ENCODE measurements at regions of chr15 and their contacts with region 1.

Region 1: GRCh38 chr15:31799715-31800321 is 230.5 kb upstream of the CHRNA7 start:
- DNase-seq: peak; percentile 87
- H3K4me3 Mint-ChIP-seq: peak overlapping the region; percentile 39
- H3K27ac Mint-ChIP-seq: peak overlapping the region; percentile 94
- H3K4me1 Mint-ChIP-seq: peaks cover 44% of the 10 kb centered on the region
- H3K27me3 Mint-ChIP-seq: no peaks in the 10 kb centered on the region
- CTCF ChIP-seq: no peak

Region 2: DNA sequence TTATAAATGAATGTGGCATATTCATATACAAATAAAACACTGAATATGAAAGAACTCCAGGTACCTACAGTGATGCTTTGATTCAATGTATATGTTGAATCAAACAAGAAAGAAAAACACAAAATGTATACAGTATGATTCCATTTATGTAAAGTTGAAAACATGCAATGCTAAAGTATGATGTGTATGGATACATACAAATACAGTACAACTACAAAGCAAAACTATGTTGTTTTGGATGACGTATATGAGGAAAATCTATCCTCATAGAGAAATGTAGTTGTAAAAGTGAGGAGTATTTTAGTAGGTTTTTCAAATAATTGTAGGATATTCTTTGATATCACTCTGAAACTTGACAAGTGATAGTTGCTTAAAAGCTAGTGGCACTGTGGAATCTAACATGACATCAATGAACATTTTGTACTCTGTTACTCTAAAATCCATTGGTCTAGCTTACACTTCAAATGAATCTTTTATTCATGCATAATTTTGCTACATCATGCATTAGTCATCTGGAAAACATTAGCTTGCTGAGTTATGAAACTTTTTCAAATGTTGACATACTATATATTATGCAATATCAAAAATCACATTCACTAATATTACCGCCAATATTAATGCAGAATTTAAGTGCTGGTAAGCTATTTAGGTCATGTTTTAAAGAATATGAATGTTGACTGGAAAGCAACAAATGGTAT is 47.6 kb before region 1 on chr15:
- CTCF ChIA-PET with region 1: no interaction called
- POLR2A ChIA-PET with region 1: interaction called, 4 read pairs
- intact Hi-C with region 1: loop called (anchors 1 kb)
- DNase-seq: peak; percentile 66
- H3K4me3 Mint-ChIP-seq: no peak overlapping the region
- H3K27ac Mint-ChIP-seq: peak overlapping the region; percentile 27
- H3K4me1 Mint-ChIP-seq: peaks cover 9% of the 10 kb centered on the region
- H3K27me3 Mint-ChIP-seq: no peaks in the 10 kb centered on the region
- CTCF ChIP-seq: no peak

Region 3: DNA sequence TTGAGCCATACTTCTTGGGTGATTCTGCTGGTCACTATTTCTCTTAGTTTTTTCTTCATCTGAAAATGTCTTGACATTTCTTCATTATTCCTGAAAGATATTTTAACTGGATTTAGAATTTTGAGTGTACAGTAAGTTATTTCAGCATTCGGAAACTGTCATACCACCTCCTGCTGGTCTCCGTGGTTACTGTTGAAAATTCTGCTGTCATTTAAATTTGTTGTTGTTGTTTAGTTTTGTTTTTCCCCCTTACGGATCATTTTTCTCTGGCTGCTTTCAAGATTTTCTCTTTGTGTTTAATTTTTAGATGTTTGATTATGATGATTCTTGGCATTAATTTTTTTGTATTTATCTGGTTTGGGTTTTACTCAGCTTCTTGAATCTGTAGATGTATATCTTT is 331.0 kb after region 1 on chr15:
- CTCF ChIA-PET with region 1: no interaction called
- POLR2A ChIA-PET with region 1: no interaction called
- intact Hi-C with region 1: no loop called
- DNase-seq: no peak
- H3K4me3 Mint-ChIP-seq: no peak overlapping the region
- H3K27ac Mint-ChIP-seq: no peak overlapping the region
- H3K4me1 Mint-ChIP-seq: no peaks in the 10 kb centered on the region
- H3K27me3 Mint-ChIP-seq: peaks cover 62% of the 10 kb centered on the region
- CTCF ChIP-seq: no peak